Kidney (tissue), 22 donors: ENCODE measurements at regions of chr1 and their contacts with region 1.

Region 1: DNA sequence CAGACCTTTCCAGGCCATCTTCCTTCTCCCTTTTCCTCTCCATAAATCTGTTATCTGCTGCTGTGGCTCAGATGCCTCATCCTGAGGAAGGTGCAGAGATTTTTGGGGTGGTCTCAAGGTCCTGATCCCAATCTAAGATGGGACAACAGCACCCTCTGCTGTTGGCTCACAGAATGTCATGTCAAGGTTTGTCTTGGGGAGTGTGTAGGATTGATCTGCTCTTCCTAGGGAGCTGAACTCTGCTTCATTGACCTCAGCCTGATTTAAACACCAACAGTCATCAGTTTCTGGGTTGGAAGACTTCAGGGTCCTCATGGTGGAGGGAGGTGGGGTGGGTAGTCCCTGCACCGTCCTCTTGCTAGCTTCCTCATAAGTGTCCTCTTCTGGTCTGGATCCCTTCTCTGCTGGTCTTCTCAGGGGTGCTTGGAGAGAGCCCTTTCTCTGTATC is 62.8 kb upstream of the LAX1 start:
- DNase-seq: peak in 4 of 5 donors; percentile 64 to 82 (median 68)
- H3K4me3 ChIP-seq: no peak overlapping the region
- H3K27ac ChIP-seq: no peak overlapping the region
- H3K4me1 ChIP-seq: no peaks in the 10 kb centered on the region
- H3K27me3 ChIP-seq: no peaks in the 10 kb centered on the region
- CTCF ChIP-seq: peak; percentile 79

Region 2: GRCh38 chr1:203163891-203164635 is 538.1 kb before region 1 on chr1:
- intact Hi-C with region 1: no loop called
- DNase-seq: no peak
- H3K4me3 ChIP-seq: no peak overlapping the region
- H3K27ac ChIP-seq: no peak overlapping the region
- H3K4me1 ChIP-seq: no peaks in the 10 kb centered on the region
- H3K27me3 ChIP-seq: no peaks in the 10 kb centered on the region
- CTCF ChIP-seq: no peak

Region 3: GRCh38 chr1:203504397-203505250 is 197.5 kb before region 1 on chr1:
- intact Hi-C with region 1: loop called (anchors 5 kb)
- DNase-seq: peak; percentile 85 to 94 (median 87)
- H3K4me3 ChIP-seq: no peak overlapping the region
- H3K27ac ChIP-seq: no peak overlapping the region
- H3K4me1 ChIP-seq: peaks cover 0 to 2% (median 0%) of the 10 kb centered on the region in 3 donors
- H3K27me3 ChIP-seq: no peaks in the 10 kb centered on the region
- CTCF ChIP-seq: peak; percentile 85

Region 4: GRCh38 chr1:203861379-203862184 is 159.4 kb after region 1 on chr1 and contains the start of gene SNRPE:
- intact Hi-C with region 1: no loop called
- DNase-seq: peak; percentile 99 to 100 (median 99)
- H3K4me3 ChIP-seq: peak within 1 kb of the TSS; percentile 79 to 99 (median 96)
- H3K27ac ChIP-seq: peak within 1 kb of the TSS; percentile 15 to 72
- H3K4me1 ChIP-seq: peaks cover 0 to 17% (median 10%) of the 10 kb centered on the region in 3 donors
- H3K27me3 ChIP-seq: no peaks in the 10 kb centered on the region
- CTCF ChIP-seq: peak; percentile 95
- total RNA-seq, gene SNRPE: 92.7 TPM